ENCODE measurements at regions of chr6 and their contacts with region 1.

Region 1: GRCh38 chr6:72760114-72760793 is 138.4 kb downstream of the KCNQ5 start:
- DNase-seq: no peak
- ATAC-seq: no peak
- H3K4me3 ChIP-seq: no peak overlapping the region
- H3K4me3 Mint-ChIP-seq: no peak overlapping the region
- H3K27ac ChIP-seq: no peak overlapping the region
- H3K27ac Mint-ChIP-seq: no peak overlapping the region
- H3K4me1 ChIP-seq: no peaks in the 10 kb centered on the region
- H3K4me1 Mint-ChIP-seq: peaks cover 0 to 14% (median 3%) of the 10 kb centered on the region in 7 donors
- H3K27me3 ChIP-seq: no peaks in the 10 kb centered on the region
- H3K27me3 Mint-ChIP-seq: no peaks in the 10 kb centered on the region

Region 2: GRCh38 chr6:72748759-72749158 is 11.5 kb before region 1 on chr6:
- CTCF ChIA-PET with region 1: interaction called, 10 read pairs
- POLR2A ChIA-PET with region 1: no interaction called
- intact Hi-C with region 1: no loop called
- DNase-seq: no peak
- ATAC-seq: no peak
- H3K4me3 ChIP-seq: no peak overlapping the region
- H3K4me3 Mint-ChIP-seq: no peak overlapping the region
- H3K27ac ChIP-seq: no peak overlapping the region
- H3K27ac Mint-ChIP-seq: no peak overlapping the region
- H3K4me1 ChIP-seq: no peaks in the 10 kb centered on the region
- H3K4me1 Mint-ChIP-seq: peaks cover 0 to 15% (median 9%) of the 10 kb centered on the region in 7 donors
- H3K27me3 ChIP-seq: no peaks in the 10 kb centered on the region
- H3K27me3 Mint-ChIP-seq: no peaks in the 10 kb centered on the region

Region 3: GRCh38 chr6:73085443-73085871 is 325.2 kb after region 1 on chr6:
- CTCF ChIA-PET with region 1: no interaction called
- POLR2A ChIA-PET with region 1: no interaction called
- intact Hi-C with region 1: no loop called
- DNase-seq: no peak
- ATAC-seq: no peak
- H3K4me3 ChIP-seq: no peak overlapping the region
- H3K4me3 Mint-ChIP-seq: no peak overlapping the region
- H3K27ac ChIP-seq: no peak overlapping the region
- H3K27ac Mint-ChIP-seq: no peak overlapping the region
- H3K4me1 ChIP-seq: no peaks in the 10 kb centered on the region
- H3K4me1 Mint-ChIP-seq: peaks cover 0 to 2% (median 0%) of the 10 kb centered on the region in 7 donors
- H3K27me3 ChIP-seq: no peaks in the 10 kb centered on the region
- H3K27me3 Mint-ChIP-seq: no peaks in the 10 kb centered on the region

Measured in naive thymus-derived CD4-positive, alpha-beta T cell (primary cell).